ENCODE measurements at regions of chr9 and their contacts with region 1.

Region 1: DNA sequence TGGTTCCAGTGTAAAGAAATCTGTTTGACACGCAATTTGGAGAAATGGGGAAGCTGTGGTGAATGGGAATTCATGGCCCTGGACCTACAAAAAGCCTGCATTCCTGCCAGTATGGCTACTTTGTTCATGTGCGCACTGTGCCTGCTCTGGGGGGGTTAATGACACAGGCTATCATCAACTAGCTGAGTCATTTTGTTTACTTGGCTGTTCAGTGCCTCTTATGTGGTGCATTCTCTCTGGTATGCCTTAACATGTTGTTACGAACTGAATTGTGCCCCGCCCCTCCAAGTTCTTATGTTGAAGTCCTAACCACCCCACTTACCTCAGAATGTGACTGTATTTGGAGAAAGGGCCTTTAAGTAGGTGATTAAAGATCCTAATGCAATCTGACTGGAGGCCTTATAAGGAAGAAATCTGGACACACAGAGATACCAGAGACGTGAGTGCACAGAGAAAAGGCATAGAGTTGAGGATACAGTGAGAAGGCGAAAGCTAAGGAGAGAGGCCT is 20.4 kb upstream of the UBAP1 start:
- DNase-seq: no peak
- H3K4me3 ChIP-seq: no peak overlapping the region
- H3K27ac ChIP-seq: no peak overlapping the region
- H3K4me1 ChIP-seq: no peaks in the 10 kb centered on the region
- H3K27me3 ChIP-seq: no peaks in the 10 kb centered on the region
- CTCF ChIP-seq: no peak

Region 2: GRCh38 chr9:34098307-34098706 is 60.1 kb before region 1 on chr9:
- intact Hi-C with region 1: loop called (anchors 10 kb)
- DNase-seq: no peak
- H3K4me3 ChIP-seq: no peak overlapping the region
- H3K27ac ChIP-seq: no peak overlapping the region
- H3K4me1 ChIP-seq: no peaks in the 10 kb centered on the region
- H3K27me3 ChIP-seq: no peaks in the 10 kb centered on the region
- CTCF ChIP-seq: no peak

Region 3: DNA sequence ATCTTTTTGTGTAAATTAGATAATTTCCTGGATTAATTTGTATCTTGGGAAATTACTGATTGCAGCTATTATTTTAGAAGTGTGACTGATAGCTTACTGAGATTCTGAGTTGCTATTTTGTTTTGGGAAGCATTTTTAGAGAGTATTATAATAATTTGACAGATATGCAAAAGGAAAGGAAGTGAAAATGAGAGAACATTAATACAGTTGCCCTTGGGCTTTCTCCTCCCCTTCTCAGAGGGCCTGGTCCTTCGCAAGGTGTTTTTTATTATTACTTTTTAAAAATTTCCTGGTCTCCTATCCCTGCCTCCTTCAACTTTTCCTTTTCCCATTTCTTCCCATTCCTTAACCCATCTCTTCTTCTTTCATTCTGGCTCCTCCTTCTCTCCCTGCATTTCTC is 53.0 kb after region 1 on chr9:
- intact Hi-C with region 1: no loop called
- DNase-seq: no peak
- H3K4me3 ChIP-seq: no peak overlapping the region
- H3K27ac ChIP-seq: no peak overlapping the region
- H3K4me1 ChIP-seq: no peaks in the 10 kb centered on the region
- H3K27me3 ChIP-seq: no peaks in the 10 kb centered on the region
- CTCF ChIP-seq: no peak

Region 4: GRCh38 chr9:34233672-34234071 is 75.3 kb after region 1 on chr9:
- intact Hi-C with region 1: no loop called
- DNase-seq: no peak
- H3K4me3 ChIP-seq: no peak overlapping the region
- H3K27ac ChIP-seq: no peak overlapping the region
- H3K4me1 ChIP-seq: no peaks in the 10 kb centered on the region
- H3K27me3 ChIP-seq: no peaks in the 10 kb centered on the region
- CTCF ChIP-seq: no peak

Measured in colonic mucosa (tissue), 4 donors.